AG04450 (cell line): ENCODE measurements at regions of chr16 and their contacts with region 1.

Region 1: GRCh38 chr16:83961591-83961990 is 6.5 kb upstream of the NECAB2 start:
- DNase-seq: no peak
- H3K4me3 ChIP-seq: no peak overlapping the region
- H3K27ac ChIP-seq: no peak overlapping the region
- H3K27me3 ChIP-seq: no peaks in the 10 kb centered on the region
- CTCF ChIP-seq: no peak

Region 2: GRCh38 chr16:83891742-83892141 is 69.8 kb before region 1 on chr16:
- CTCF ChIA-PET with region 1: no interaction called
- POLR2A ChIA-PET with region 1: interaction called, 11 read pairs
- DNase-seq: no peak
- H3K4me3 ChIP-seq: no peak overlapping the region
- H3K27ac ChIP-seq: no peak overlapping the region
- H3K27me3 ChIP-seq: peaks cover 14% of the 10 kb centered on the region
- CTCF ChIP-seq: no peak

Region 3: GRCh38 chr16:83989285-83989684 is 27.7 kb after region 1 on chr16:
- CTCF ChIA-PET with region 1: no interaction called
- POLR2A ChIA-PET with region 1: no interaction called
- DNase-seq: no peak
- H3K4me3 ChIP-seq: no peak overlapping the region
- H3K27ac ChIP-seq: no peak overlapping the region
- H3K27me3 ChIP-seq: peaks cover 18% of the 10 kb centered on the region
- CTCF ChIP-seq: no peak